ENCODE measurements at regions of chr14 and their contacts with region 1.

Region 1: GRCh38 chr14:96204151-96205058 is at the start of gene BDKRB2:
- DNase-seq: peak; percentile 78
- H3K4me3 ChIP-seq: peak within 1 kb of the TSS; percentile 76
- H3K27ac ChIP-seq: peak within 1 kb of the TSS; percentile 83
- H3K27me3 ChIP-seq: no peaks in the 10 kb centered on the region
- CTCF ChIP-seq: no peak
- polyA plus RNA-seq, gene BDKRB2: 182 and 212 TPM in 2 replicates

Region 2: GRCh38 chr14:96136352-96137005 is 67.9 kb before region 1 on chr14:
- CTCF ChIA-PET with region 1: no interaction called
- POLR2A ChIA-PET with region 1: interaction called, 16 read pairs
- DNase-seq: no peak
- H3K4me3 ChIP-seq: no peak overlapping the region
- H3K27ac ChIP-seq: no peak overlapping the region
- H3K27me3 ChIP-seq: no peaks in the 10 kb centered on the region
- CTCF ChIP-seq: no peak

Region 3: GRCh38 chr14:96146131-96146806 is 58.1 kb before region 1 on chr14:
- CTCF ChIA-PET with region 1: interaction called, 3 read pairs
- POLR2A ChIA-PET with region 1: interaction called, 16 read pairs
- DNase-seq: no peak
- H3K4me3 ChIP-seq: no peak overlapping the region
- H3K27ac ChIP-seq: peak overlapping the region; percentile 85
- H3K27me3 ChIP-seq: no peaks in the 10 kb centered on the region
- CTCF ChIP-seq: no peak

Region 4: GRCh38 chr14:96176811-96177603 is 27.4 kb before region 1 on chr14:
- CTCF ChIA-PET with region 1: no interaction called
- POLR2A ChIA-PET with region 1: interaction called, 10 read pairs
- DNase-seq: peak; percentile 89
- H3K4me3 ChIP-seq: no peak overlapping the region
- H3K27ac ChIP-seq: peak overlapping the region; percentile 72
- H3K27me3 ChIP-seq: no peaks in the 10 kb centered on the region
- CTCF ChIP-seq: no peak

Measured in AG04450 (cell line).